CD8-positive, alpha-beta T cell (primary cell): ENCODE measurements at regions of chr2 and their contacts with region 1.

Region 1: GRCh38 chr2:119753041-119753929 is 6.4 kb upstream of the PTPN4 start:
- DNase-seq: peak in 8 of 9 experiments; percentile 7 to 79 (median 33)
- ATAC-seq: peak; percentile 92
- H3K4me3 ChIP-seq: no peak overlapping the region
- H3K4me3 Mint-ChIP-seq: no peak overlapping the region
- H3K27ac ChIP-seq: no peak overlapping the region
- H3K27ac Mint-ChIP-seq: no peak overlapping the region
- H3K4me1 ChIP-seq: no peaks in the 10 kb centered on the region
- H3K4me1 Mint-ChIP-seq: peaks cover 5% of the 10 kb centered on the region
- H3K27me3 ChIP-seq: no peaks in the 10 kb centered on the region
- H3K27me3 Mint-ChIP-seq: no peaks in the 10 kb centered on the region
- CTCF ChIP-seq: peak; percentile 81

Region 2: GRCh38 chr2:119739580-119740255 is 13.6 kb before region 1 on chr2:
- CTCF ChIA-PET with region 1: interaction called, 25 read pairs
- POLR2A ChIA-PET with region 1: no interaction called
- intact Hi-C with region 1: no loop called
- DNase-seq: no peak
- ATAC-seq: no peak
- H3K4me3 ChIP-seq: no peak overlapping the region
- H3K4me3 Mint-ChIP-seq: no peak overlapping the region
- H3K27ac ChIP-seq: no peak overlapping the region
- H3K27ac Mint-ChIP-seq: no peak overlapping the region
- H3K4me1 ChIP-seq: no peaks in the 10 kb centered on the region
- H3K4me1 Mint-ChIP-seq: no peaks in the 10 kb centered on the region
- H3K27me3 ChIP-seq: no peaks in the 10 kb centered on the region
- H3K27me3 Mint-ChIP-seq: peaks cover 2% of the 10 kb centered on the region
- CTCF ChIP-seq: no peak

Region 3: DNA sequence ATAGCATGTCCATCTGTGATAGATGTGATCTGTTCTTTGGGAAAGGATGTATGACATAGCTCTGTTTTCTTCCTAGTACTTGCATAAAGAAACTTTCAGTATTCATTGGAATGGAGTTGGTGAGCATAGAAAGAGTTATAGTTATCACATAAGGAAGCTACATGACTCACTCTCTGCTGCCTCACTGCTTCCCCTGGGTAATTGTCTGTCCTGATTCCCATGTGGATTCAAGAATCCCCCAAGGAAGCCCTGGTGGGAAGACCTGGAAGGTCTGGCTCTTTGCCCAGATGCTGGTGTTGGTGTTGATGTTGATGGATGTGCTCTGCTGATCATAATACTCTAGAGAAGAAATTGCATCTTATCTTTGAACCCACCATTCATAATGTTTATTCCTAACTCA is 67.0 kb after region 1 on chr2:
- CTCF ChIA-PET with region 1: interaction called, 31 read pairs
- POLR2A ChIA-PET with region 1: interaction called, 3 read pairs
- intact Hi-C with region 1: loop called (anchors 1 kb)
- DNase-seq: no peak
- ATAC-seq: no peak
- H3K4me3 ChIP-seq: no peak overlapping the region
- H3K4me3 Mint-ChIP-seq: no peak overlapping the region
- H3K27ac ChIP-seq: no peak overlapping the region
- H3K27ac Mint-ChIP-seq: peak overlapping the region; percentile 14
- H3K4me1 ChIP-seq: peaks cover 8% of the 10 kb centered on the region
- H3K4me1 Mint-ChIP-seq: peaks cover 52% of the 10 kb centered on the region
- H3K27me3 ChIP-seq: no peaks in the 10 kb centered on the region
- H3K27me3 Mint-ChIP-seq: no peaks in the 10 kb centered on the region
- CTCF ChIP-seq: no peak

Region 4: DNA sequence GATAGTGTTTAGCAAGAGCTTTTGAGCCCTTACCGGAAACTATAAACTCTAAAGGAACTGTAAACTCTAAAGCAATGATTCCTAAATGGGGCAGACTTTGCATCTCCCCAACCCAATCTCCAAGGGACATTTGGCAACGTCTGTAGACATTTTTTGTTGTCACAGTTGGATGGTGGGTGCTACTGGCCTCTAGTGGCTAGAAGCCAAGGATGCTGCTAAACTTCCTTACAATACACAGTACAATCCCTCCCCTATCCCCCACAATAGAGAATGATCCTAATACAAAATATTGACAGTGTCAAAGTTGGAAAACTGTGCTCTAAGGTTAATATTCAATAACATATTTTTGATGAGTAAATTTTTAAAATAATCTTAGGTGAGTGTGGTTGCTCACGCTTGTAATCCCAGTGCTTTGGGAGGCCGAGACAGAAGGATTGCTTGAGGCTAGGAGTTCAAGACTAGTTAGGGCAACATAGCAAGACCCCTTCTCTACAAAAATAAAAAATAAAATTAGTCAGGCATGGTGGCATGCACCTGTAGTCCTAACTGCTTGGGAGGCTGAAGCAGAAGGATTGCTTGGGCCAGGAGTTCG is 73.2 kb after region 1 on chr2:
- CTCF ChIA-PET with region 1: interaction called, 43 read pairs
- POLR2A ChIA-PET with region 1: interaction called, 3 read pairs
- intact Hi-C with region 1: loop called (anchors 1 kb)
- DNase-seq: peak in 5 of 9 experiments; percentile 39 to 71 (median 48)
- ATAC-seq: peak; percentile 72
- H3K4me3 ChIP-seq: no peak overlapping the region
- H3K4me3 Mint-ChIP-seq: no peak overlapping the region
- H3K27ac ChIP-seq: no peak overlapping the region
- H3K27ac Mint-ChIP-seq: no peak overlapping the region
- H3K4me1 ChIP-seq: peaks cover 6% of the 10 kb centered on the region
- H3K4me1 Mint-ChIP-seq: peaks cover 56% of the 10 kb centered on the region
- H3K27me3 ChIP-seq: no peaks in the 10 kb centered on the region
- H3K27me3 Mint-ChIP-seq: no peaks in the 10 kb centered on the region
- CTCF ChIP-seq: peak; percentile 73

Region 5: DNA sequence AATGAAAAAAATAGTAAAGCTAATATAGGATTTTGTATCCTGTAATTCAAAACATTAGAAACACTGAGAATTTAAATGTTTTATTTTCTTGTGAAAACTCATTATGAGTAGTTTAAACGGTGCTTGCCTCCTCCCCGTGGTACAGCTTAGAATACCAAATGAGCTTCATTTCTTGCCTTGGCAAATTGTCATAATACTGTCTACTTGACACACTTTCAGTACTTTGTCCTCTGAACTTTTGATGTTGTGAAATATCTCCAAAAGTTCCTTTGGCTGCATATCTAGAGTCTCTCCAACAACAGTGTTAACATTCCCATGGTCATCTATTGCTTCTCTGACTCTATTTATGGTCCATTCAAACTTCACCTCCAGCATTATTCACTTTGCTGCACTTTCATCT is 197.7 kb after region 1 on chr2:
- CTCF ChIA-PET with region 1: interaction called, 6 read pairs
- POLR2A ChIA-PET with region 1: no interaction called
- intact Hi-C with region 1: loop called in 1 of 2 experiments (anchors 5 kb)
- DNase-seq: no peak
- ATAC-seq: no peak
- H3K4me3 ChIP-seq: no peak overlapping the region
- H3K4me3 Mint-ChIP-seq: no peak overlapping the region
- H3K27ac ChIP-seq: no peak overlapping the region
- H3K27ac Mint-ChIP-seq: peak overlapping the region; percentile 66
- H3K4me1 ChIP-seq: peaks cover 4% of the 10 kb centered on the region
- H3K4me1 Mint-ChIP-seq: peaks cover 42% of the 10 kb centered on the region
- H3K27me3 ChIP-seq: no peaks in the 10 kb centered on the region
- H3K27me3 Mint-ChIP-seq: no peaks in the 10 kb centered on the region
- CTCF ChIP-seq: no peak